Left lung (tissue), 14 donors: ENCODE measurements at regions of chr5 and their contacts with region 1.

Region 1: GRCh38 chr5:39224196-39224761 is 4.9 kb upstream of the FYB1 start:
- DNase-seq: peak in 2 of 4 donors; percentile 68 to 75
- ATAC-seq: peak; percentile 67
- H3K4me3 ChIP-seq: no peak overlapping the region
- H3K27ac ChIP-seq: peak overlapping the region; percentile 5 to 85
- H3K4me1 ChIP-seq: peaks cover 0 to 57% of the 10 kb centered on the region in 2 donors
- H3K27me3 ChIP-seq: no peaks in the 10 kb centered on the region
- CTCF ChIP-seq: no peak

Region 2: GRCh38 chr5:39566891-39567290 is 342.6 kb after region 1 on chr5:
- intact Hi-C with region 1: loop called in 1 of 2 experiments (anchors 10 kb)
- DNase-seq: no peak
- ATAC-seq: no peak
- H3K4me3 ChIP-seq: no peak overlapping the region
- H3K27ac ChIP-seq: no peak overlapping the region
- H3K4me1 ChIP-seq: no peaks in the 10 kb centered on the region
- H3K27me3 ChIP-seq: no peaks in the 10 kb centered on the region
- CTCF ChIP-seq: no peak

Region 3: DNA sequence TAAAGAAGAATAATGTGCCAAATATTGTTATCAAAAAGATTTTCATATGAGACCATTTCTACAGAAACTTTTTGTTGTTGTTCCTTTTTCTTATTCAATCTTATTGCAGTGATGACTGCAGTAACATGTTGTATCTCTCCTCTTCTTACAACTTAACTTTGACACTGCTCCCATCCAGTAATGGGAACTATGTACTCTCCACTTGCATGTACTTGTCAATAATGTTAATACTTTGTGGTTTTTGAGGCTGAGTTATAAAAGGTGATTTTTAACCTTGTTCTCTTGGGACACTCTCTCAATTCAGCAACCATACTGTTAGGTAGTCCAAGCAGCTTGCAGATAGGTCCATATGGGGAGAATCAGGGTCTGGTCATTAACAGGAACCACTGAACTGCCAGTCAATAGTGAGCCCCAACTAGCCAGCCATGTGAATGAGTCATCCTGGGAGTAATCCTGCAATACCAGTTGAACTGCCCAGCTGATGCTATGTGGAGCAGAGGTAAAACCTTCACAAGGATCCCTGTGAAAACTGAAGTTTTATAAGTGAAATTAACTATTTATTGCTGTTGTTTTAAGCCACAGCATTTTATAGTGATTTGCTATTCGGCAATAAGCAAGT is 400.1 kb after region 1 on chr5:
- intact Hi-C with region 1: no loop called
- DNase-seq: peak in 1 of 4 donors; percentile 29
- ATAC-seq: peak; percentile 92
- H3K4me3 ChIP-seq: no peak overlapping the region
- H3K27ac ChIP-seq: no peak overlapping the region
- H3K4me1 ChIP-seq: no peaks in the 10 kb centered on the region
- H3K27me3 ChIP-seq: no peaks in the 10 kb centered on the region
- CTCF ChIP-seq: no peak